ENCODE measurements at regions of chr1 and their contacts with region 1.

Region 1: GRCh38 chr1:100613817-100614559 is 76.0 kb downstream of the GPR88 start:
- DNase-seq: no peak
- ATAC-seq: no peak
- H3K4me3 ChIP-seq: no peak overlapping the region
- H3K27ac ChIP-seq: no peak overlapping the region
- H3K4me1 ChIP-seq: peaks cover 3% of the 10 kb centered on the region
- H3K27me3 ChIP-seq: no peaks in the 10 kb centered on the region

Region 2: DNA sequence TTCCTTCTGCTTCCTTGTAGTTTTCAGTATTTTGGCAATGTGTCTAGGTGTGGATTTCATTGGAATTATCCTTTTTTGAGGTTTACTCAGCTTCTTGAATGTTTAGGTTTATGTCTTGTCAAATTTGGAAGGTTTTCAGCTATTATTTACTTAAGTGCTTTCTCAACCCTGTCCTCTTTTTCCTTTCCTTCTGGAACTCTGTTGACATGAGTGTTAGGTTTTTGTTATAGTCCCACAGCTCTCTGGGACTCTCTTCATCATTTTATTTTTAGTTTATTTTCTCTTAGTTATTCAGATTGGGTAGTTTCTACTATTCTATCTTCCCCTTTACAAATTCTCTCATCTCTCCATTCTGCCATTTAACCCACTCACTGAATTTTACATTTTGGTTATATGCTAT is 139.2 kb before region 1 on chr1:
- intact Hi-C with region 1: loop called in 1 of 4 experiments (anchors 10 kb)
- DNase-seq: no peak
- ATAC-seq: no peak
- H3K4me3 ChIP-seq: no peak overlapping the region
- H3K27ac ChIP-seq: no peak overlapping the region
- H3K4me1 ChIP-seq: no peaks in the 10 kb centered on the region
- H3K27me3 ChIP-seq: no peaks in the 10 kb centered on the region

Measured in right cardiac atrium (tissue), 5 donors.